Left cardiac atrium (tissue), 4 donors: ENCODE measurements at regions of chr5 and their contacts with region 1.

Region 1: DNA sequence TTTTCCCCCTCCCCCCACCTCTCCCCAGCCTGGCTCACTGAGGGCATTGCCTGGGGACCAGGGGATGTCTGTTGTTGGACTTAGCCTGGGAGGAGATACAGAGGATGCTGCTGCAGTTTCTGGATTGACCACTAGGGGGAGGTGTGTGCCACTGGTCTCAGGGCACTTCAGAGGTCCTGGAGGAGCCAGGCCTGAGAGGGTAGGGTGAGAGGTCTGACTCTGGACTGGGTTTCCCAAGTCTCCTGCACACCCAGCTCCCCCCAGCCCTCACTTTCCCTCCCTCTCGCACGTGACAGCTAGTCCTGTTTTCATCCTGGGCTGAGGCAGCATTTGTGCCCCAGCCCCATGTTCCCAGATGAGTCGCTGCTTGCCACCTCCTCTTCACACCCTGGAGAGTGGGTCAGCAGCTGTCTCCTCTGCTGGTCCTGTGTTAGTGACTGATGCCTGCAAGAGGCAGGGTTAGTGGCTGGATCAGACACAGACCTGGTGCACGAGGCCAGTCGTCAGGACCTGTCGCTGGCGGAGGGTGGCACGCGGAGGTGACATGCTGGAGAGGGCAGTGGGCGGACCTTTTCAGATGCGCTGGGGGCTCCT is 4.4 kb downstream of the IL3 start:
- DNase-seq: peak; percentile 74
- ATAC-seq: peak; percentile 79

Region 2: DNA sequence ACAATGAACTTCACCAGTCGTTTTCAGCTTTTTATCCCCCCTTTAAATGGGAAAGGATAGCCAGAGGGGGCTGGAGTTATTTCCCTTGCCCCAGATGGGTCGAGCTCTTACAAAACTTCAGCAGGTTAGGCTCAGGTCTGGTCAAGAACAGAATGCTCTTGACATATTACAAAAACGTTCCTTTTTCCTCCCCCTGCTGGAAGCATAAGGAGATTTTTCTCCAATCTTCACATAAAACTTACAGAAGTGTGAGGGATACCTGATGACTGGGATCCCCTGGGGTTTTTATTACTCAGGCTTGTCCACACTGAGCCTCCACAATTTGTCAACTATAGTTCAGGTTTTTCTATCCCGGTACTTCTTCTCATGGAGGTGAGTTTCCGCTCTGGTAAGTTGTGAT is 69.5 kb after region 1 on chr5:
- intact Hi-C with region 1: loop called in 1 of 2 experiments (anchors 5 kb)
- DNase-seq: no peak
- ATAC-seq: no peak

Region 3: DNA sequence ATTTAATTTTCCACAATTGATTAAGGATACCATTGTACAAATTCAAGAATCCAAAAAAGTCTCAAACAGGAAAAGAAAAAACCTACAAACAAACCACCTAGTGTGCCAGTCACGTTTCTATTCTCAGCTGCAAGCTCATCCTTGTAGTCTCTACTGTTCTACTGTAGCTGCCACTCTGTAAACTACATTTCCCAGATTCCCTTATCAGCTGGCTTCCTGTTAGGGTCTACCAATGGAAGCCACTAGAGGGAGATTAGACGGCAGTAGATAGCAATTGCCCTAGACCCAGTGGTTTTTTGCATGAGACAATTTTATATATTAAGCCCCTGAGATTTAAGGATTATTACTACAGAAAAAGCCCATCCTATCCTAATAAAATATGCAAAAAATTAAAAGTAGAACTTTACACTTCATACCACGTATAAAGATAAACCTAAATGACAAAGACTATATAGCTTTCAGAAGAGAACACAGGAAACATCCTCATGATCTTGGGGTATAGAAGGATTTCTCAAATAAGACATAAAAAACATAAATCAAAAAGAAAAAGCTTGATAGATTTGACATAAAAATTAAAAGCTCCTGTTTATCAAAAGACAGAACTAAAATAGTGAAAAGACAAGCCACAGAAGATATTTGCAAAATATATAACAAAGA is 125.5 kb after region 1 on chr5:
- intact Hi-C with region 1: loop called in 1 of 2 experiments (anchors 10 kb)
- DNase-seq: no peak
- ATAC-seq: peak; percentile 95 to 96